Cardiac septum (tissue), 1 donor: ENCODE measurements at regions of chr19 and their contacts with region 1.

Region 1: GRCh38 chr19:57746580-57747471 is at the start of gene ZNF776:
- DNase-seq: peak; percentile 93
- total RNA-seq, gene ZNF776: 10.0 TPM

Region 2: GRCh38 chr19:57675881-57676280 is 70.9 kb before region 1 on chr19:
- intact Hi-C with region 1: no loop called
- DNase-seq: no peak

Region 3: DNA sequence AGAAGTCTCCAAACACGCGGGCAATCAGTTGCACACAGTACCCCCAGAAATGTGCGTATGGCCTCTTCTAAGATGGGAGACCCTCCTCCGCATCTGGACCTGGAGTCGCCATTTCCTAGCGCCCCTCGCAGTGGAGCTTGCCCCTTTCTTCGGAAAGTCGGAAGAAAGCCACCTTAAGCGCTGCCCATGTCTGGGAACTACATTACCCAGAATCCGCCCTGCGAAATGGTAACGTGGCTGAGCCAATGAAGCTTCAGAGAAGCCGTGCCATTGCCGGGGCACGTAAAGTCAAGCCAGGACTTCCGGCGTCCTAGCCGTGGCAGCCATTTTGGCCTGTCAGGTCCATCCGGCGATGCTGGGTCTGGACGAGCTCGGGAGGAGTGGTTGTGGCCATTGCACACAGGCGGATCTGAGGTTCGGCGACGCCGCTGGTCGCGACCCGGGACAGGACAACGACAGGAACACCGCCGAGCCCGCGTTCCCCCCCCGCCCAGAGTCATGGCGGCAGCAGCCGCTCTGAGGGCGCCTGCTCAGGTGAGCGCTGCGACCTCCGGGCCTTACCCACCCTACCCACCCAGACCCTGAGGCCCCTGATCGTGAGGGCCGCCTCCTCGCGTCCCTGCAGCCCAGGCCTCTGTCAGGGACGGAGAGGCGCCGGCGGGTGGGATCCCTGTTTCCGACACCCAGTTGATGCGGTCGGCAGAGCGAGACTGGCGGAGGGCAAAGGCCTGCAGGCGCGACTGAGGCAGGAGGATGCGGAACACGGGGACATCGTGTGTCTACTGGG is 22.7 kb after region 1 on chr19 and contains the start of gene ZNF586:
- intact Hi-C with region 1: loop called (anchors 2 kb)
- DNase-seq: peak; percentile 97
- total RNA-seq, gene ZNF586: 16.8 TPM

Region 4: DNA sequence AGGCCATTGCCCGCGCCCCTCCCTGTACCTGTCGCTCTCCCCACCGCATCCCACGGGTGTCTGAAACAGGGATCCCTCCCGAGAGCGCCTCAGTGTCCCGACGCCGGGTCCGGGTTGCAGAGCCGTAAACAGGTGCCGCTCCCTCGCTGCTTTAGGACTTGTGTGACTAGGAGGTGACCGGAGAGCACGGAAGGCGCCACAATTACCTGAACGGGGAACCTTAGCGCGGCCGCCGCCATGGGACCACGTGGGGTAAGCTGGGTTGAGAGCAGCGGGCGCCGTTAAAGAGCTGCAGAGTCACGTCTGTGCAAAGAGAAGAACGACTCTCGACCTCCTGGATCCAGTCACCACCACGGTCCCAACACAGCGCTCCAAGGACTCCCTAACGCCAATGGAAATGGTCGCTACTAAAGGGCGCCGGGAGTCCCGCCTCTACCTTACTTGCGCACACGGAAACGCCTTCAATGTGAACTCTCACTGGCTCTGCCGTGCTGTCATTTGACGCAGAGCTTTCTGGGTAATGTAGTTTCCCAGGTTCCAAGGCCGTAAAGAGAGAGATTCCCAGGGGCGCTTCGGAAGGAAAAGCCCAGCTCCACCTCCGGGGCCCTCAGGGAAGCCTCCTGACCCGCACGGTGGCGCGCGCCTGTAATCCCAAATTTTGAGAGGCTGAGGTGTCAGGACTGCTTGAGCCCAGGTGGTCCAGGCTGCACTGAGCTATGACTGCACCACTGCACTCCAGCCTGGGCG is 67.9 kb after region 1 on chr19 and contains the start of gene ZNF552:
- intact Hi-C with region 1: loop called (anchors 2 kb)
- DNase-seq: peak; percentile 92
- total RNA-seq, gene ZNF552: 3.0 TPM